PC-9 (cell line): ENCODE measurements at regions of chr3 and their contacts with region 1.

Region 1: GRCh38 chr3:44047806-44048562 is 193.7 kb upstream of the TOPAZ1 start:
- DNase-seq: peak; percentile 61 to 91
- H3K4me3 ChIP-seq: no peak overlapping the region; the same call in 1 of the 2 replicates
- H3K27ac ChIP-seq: peak overlapping the region; percentile 67
- H3K4me1 ChIP-seq: peaks cover 48% of the 10 kb centered on the region
- H3K27me3 ChIP-seq: no peaks in the 10 kb centered on the region
- CTCF ChIP-seq: no peak

Region 2: DNA sequence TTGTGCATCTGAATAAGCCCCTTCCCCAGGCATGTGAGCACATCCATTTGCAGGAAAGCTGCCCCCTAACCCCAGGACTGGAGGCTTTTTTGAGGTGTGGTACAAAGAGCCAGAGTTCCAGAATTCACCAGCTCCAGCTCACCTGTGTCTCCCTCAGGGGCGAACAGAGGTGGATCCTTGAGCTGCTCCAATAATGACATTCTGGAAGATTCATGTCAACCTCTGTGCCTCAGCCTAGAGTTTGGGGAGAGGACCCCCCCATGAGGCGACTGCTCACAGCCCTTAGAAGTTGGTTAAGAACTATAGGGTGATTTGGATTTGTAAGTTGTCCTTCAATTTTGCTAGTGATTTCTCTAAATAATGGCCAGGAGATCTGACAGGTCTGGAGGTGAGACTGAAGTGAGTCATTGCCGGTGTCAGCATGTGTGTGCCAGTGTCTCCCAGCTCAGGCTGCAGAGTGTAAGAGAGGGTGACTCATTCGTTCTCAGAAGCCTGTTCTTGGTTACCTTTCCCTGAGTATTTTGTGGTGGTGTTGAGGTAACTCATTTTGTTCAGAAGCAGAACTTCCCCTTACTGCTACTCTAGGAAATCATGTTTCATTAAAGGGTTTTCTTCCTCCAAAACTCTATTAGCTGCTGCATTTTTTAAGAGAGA is 56.8 kb after region 1 on chr3:
- CTCF ChIA-PET with region 1: no interaction called
- POLR2A ChIA-PET with region 1: no interaction called
- intact Hi-C with region 1: loop called (anchors 2 kb)
- DNase-seq: peak; percentile 65 to 89
- H3K4me3 ChIP-seq: no peak overlapping the region
- H3K27ac ChIP-seq: peak overlapping the region; percentile 57
- H3K4me1 ChIP-seq: peaks cover 20% of the 10 kb centered on the region
- H3K27me3 ChIP-seq: no peaks in the 10 kb centered on the region
- CTCF ChIP-seq: no peak